PC-9 (cell line): ENCODE measurements at regions of chr22 and their contacts with region 1.

Region 1: DNA sequence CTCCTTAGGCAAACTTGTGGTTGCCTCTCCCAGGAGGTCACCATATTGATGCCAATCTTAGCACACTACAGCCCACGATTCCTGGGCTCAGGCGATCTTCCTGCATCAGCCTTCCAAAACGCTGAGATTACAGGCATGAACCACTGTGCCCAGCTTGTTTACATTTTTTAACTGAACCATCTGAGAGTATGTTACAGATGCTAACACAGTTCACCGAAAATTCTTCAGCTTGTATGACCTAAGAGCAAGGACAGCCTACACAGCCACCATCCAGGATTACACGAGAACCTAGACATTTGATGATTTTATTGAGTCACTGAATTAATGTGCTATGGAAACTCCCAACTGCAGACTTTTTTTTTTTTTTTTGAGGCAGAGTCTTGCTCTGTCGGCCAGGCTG is 5.8 kb upstream of the LGALS1 start:
- DNase-seq: no peak
- H3K4me3 ChIP-seq: no peak overlapping the region
- H3K27ac ChIP-seq: no peak overlapping the region
- H3K4me1 ChIP-seq: peaks cover 15% of the 10 kb centered on the region
- H3K27me3 ChIP-seq: no peaks in the 10 kb centered on the region
- CTCF ChIP-seq: no peak

Region 2: DNA sequence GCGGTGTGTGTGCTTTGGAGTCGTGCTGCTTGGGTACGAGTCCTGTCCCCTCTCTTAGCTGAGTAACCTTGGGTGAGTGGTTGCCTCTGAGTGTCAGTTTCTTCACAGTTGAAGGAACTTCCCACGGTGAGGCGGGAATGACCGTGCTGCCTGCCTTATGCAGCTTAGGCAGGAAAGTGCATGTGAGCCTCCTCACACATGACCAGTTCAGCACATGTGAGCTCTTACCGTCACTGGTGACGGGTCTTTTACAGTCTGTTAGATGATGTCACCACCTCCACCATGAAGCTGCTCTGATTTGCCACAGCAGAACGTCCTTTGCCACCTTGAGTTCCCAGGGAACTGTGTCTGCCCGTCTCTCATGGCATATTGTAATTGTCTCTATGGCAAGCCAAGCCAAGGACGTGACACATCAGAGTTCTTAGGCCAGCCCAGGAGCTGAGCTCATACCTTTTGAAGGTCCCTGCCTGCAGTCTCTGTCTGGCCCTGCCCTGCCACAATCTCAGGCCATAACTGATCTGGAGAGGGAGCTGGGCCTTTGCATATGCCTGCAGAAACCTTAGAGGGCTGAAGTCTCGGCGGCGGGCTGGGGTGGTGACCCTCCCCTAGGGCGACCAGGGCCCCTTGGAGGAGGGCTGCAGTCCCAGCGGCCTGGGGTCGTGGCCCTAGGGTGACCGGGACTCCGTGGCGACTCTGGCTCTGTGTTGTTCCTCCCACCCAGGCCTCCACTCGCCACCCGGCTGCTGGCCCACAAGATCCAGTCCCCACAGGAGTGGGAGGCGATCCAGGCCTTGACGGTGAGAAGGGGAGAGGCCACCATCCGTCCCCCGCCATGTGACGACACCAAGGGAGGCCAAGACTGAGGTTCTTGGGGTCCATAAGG is 53.1 kb before region 1 on chr22:
- CTCF ChIA-PET with region 1: interaction called, 4 read pairs
- POLR2A ChIA-PET with region 1: interaction called, 13 read pairs
- intact Hi-C with region 1: no loop called
- DNase-seq: no peak
- H3K4me3 ChIP-seq: no peak overlapping the region
- H3K27ac ChIP-seq: no peak overlapping the region
- H3K4me1 ChIP-seq: no peaks in the 10 kb centered on the region
- H3K27me3 ChIP-seq: no peaks in the 10 kb centered on the region
- CTCF ChIP-seq: no peak

Region 3: GRCh38 chr22:37734964-37735451 is 65.4 kb after region 1 on chr22:
- CTCF ChIA-PET with region 1: interaction called, 3 read pairs
- POLR2A ChIA-PET with region 1: interaction called, 10 read pairs
- intact Hi-C with region 1: no loop called
- DNase-seq: peak; percentile 64 to 68
- H3K4me3 ChIP-seq: no peak overlapping the region
- H3K27ac ChIP-seq: no peak overlapping the region
- H3K4me1 ChIP-seq: no peaks in the 10 kb centered on the region
- H3K27me3 ChIP-seq: no peaks in the 10 kb centered on the region
- CTCF ChIP-seq: peak; percentile 77